ENCODE measurements at regions of chr17 and their contacts with region 1.

Region 1: GRCh38 chr17:78789663-78790181 is 7.6 kb upstream of the CYTH1 start:
- DNase-seq: peak; percentile 49 to 91 (median 78)
- ATAC-seq: peak; percentile 81 to 86
- H3K4me3 Mint-ChIP-seq: peak overlapping the region; percentile 42 to 85 (median 69)
- H3K27ac Mint-ChIP-seq: peak overlapping the region; percentile 88 to 98 (median 98)
- H3K4me1 Mint-ChIP-seq: peaks cover 27 to 83% (median 79%) of the 10 kb centered on the region in 4 donors
- H3K27me3 Mint-ChIP-seq: no peaks in the 10 kb centered on the region

Region 2: DNA sequence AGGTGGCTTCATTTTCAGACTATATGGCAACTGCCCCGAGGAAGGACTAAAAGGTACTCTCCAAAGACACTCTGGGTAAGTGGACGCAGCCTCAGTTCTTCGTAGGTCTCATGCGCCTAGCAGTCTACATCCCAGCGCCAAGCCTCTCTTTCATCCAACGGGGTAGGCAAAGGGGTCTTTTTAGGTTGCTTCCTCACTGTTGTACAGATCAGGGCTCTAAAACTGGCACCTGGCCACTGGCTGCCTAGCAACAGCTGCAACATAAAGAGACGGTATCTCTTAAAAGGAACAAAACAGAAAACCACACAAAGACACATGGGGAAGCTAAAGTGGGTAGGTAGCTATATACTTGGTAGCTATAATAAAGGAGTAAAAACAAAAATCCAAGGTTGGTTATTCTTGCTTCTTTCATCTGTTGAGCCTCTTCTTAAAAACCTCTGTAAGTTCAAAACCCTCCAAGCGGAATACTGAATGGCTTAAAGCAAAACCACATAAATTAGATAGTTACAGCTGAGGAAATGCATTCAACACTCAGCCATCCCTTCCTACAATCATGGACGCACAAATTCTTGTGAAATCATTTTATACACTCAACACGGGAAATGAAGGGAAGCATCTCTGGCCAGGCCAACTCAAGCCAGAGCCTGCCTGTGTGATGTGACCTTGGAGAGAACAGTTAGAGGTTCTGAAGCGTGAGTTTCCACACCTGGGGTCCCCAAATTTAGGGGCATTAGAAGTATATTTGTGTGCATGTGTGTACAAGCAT is 30.3 kb before region 1 on chr17:
- POLR2A ChIA-PET with region 1: interaction called, 188 read pairs
- DNase-seq: peak; percentile 68 to 97 (median 90)
- ATAC-seq: peak; percentile 75 to 87
- H3K4me3 Mint-ChIP-seq: peak overlapping the region; percentile 61 to 88 (median 79)
- H3K27ac Mint-ChIP-seq: peak overlapping the region; percentile 90 to 99 (median 98)
- H3K4me1 Mint-ChIP-seq: peaks cover 26 to 90% (median 76%) of the 10 kb centered on the region in 4 donors
- H3K27me3 Mint-ChIP-seq: no peaks in the 10 kb centered on the region

Region 3: DNA sequence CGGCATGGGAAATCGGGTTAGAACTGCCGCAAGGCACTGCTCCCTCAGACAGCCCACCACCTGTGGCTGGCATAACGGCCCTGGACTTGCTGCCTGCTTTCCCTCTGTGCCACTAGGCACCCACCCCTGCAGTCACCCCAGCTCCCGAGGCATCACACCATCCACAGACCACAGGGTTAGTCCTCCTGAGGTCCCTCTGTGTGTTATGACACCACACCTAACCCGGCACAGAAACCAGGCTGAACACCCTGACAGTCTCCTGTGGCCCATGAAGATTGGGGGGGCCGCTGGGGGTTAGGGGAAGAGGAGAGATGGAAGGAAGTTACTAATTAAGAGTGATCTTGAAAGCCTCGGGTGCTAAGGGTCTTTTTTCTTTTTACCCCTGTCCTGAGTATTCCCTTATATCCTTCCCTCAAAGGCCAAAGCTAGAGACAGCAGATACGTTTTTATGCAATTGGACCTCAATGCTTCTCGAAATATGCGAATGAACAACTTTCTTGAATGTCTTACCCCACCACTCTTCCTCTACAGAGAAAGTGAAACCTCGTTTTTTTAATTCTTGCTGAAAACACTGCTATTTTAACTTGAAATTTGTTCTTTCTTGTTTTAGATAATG is 14.7 kb before region 1 on chr17:
- POLR2A ChIA-PET with region 1: interaction called, 188 read pairs
- DNase-seq: peak in 9 of 10 donors; percentile 41 to 80 (median 63)
- ATAC-seq: peak; percentile 50 to 55
- H3K4me3 Mint-ChIP-seq: peak overlapping the region; percentile 84 to 98 (median 91)
- H3K27ac Mint-ChIP-seq: peak overlapping the region in 8 of 10 donors; percentile 94 to 99 (median 98)
- H3K4me1 Mint-ChIP-seq: peaks cover 29 to 79% (median 68%) of the 10 kb centered on the region in 4 donors
- H3K27me3 Mint-ChIP-seq: no peaks in the 10 kb centered on the region

Measured in naive thymus-derived CD8-positive, alpha-beta T cell (primary cell).